ENCODE measurements at regions of chr4 and their contacts with region 1.

Region 1: GRCh38 chr4:15655229-15656037 is at the start of gene FBXL5:
- DNase-seq: peak in 1 of 2 donors; percentile 89
- H3K4me3 ChIP-seq: peak within 1 kb of the TSS; percentile 79 to 96
- H3K27ac ChIP-seq: peak within 1 kb of the TSS; percentile 99
- H3K4me1 ChIP-seq: peaks cover 38% of the 10 kb centered on the region
- H3K27me3 ChIP-seq: no peaks in the 10 kb centered on the region
- CTCF ChIP-seq: no peak
- POLR2A ChIP-seq: peak in 1 of 2 donors; percentile 93
- total RNA-seq, gene FBXL5: 103 TPM

Region 2: GRCh38 chr4:15479089-15479912 is 176.1 kb before region 1 on chr4:
- intact Hi-C with region 1: loop called (anchors 10 kb)
- DNase-seq: no peak
- H3K4me3 ChIP-seq: peak overlapping the region; percentile 43 to 51
- H3K27ac ChIP-seq: peak overlapping the region; percentile 91
- H3K4me1 ChIP-seq: peaks cover 18% of the 10 kb centered on the region
- H3K27me3 ChIP-seq: no peaks in the 10 kb centered on the region
- CTCF ChIP-seq: peak; percentile 19 to 60 (median 53)
- POLR2A ChIP-seq: no peak

Measured in vagina (tissue), 2 donors.